ENCODE measurements at regions of chr12 and their contacts with region 1.

Region 1: GRCh38 chr12:49945394-49946080 is 5.0 kb upstream of the AQP2 start:
- DNase-seq: peak; percentile 88
- ATAC-seq: peak; percentile 99
- H3K4me3 Mint-ChIP-seq: peak overlapping the region; percentile 70
- H3K27ac Mint-ChIP-seq: peak overlapping the region; percentile 92
- H3K4me1 Mint-ChIP-seq: peaks cover 24% of the 10 kb centered on the region
- H3K27me3 Mint-ChIP-seq: no peaks in the 10 kb centered on the region

Region 2: DNA sequence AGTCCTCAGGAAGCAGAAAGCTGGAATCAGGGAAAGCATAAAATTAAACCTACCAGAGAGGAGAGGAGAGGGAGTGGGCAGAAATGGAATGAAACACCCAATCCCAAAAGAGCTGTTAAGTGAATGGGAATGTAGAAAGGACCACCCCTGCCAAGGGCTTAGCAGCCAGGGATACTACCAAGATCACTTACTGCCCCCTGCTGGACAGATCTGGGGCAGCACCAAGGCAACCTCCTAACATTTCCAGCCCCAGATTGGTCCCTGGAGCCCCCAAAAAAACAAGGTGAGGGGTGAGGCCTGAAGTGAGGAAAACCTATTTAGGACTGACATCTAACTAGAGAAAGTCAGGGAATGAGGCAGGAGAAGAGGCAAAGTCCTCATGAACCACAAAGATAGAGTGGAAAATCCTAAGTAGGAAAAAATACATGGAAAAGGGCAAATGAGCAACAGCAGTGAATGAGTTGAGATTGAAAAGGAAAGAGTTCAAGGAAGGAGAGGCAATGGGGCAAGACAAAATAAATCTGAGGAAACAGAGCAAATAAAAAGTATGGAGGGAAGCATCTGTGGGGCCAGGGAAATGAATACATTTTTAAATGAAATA is 1009.1 kb before region 1 on chr12:
- CTCF ChIA-PET with region 1: no interaction called
- POLR2A ChIA-PET with region 1: no interaction called
- DNase-seq: peak; percentile 88
- ATAC-seq: peak; percentile 60
- H3K4me3 Mint-ChIP-seq: no peak overlapping the region
- H3K27ac Mint-ChIP-seq: no peak overlapping the region
- H3K4me1 Mint-ChIP-seq: peaks cover 26% of the 10 kb centered on the region
- H3K27me3 Mint-ChIP-seq: no peaks in the 10 kb centered on the region

Region 3: DNA sequence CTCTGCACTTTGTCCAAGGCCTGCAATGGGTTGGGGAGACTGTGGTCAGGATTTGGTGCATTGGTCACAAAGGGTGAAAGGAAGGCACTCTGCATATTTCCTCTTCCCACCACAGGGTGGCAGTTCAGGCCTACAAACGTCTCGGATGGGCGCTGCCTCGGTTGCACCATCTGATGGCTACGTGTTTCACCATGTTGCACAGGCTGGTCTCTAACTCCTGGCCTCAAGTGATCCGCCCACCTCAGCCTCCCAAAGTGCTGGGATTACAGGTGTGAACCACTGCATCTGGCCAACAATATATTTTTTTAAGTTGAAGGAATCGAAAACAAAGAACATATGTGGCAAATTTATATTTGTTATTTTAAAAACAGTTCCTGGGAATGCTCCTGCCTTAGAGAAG is 169.1 kb before region 1 on chr12:
- CTCF ChIA-PET with region 1: interaction called, 11 read pairs
- POLR2A ChIA-PET with region 1: no interaction called
- DNase-seq: peak; percentile 78
- ATAC-seq: peak; percentile 85
- H3K4me3 Mint-ChIP-seq: no peak overlapping the region
- H3K27ac Mint-ChIP-seq: peak overlapping the region; percentile 48
- H3K4me1 Mint-ChIP-seq: peaks cover 20% of the 10 kb centered on the region
- H3K27me3 Mint-ChIP-seq: peaks cover 20% of the 10 kb centered on the region

Region 4: DNA sequence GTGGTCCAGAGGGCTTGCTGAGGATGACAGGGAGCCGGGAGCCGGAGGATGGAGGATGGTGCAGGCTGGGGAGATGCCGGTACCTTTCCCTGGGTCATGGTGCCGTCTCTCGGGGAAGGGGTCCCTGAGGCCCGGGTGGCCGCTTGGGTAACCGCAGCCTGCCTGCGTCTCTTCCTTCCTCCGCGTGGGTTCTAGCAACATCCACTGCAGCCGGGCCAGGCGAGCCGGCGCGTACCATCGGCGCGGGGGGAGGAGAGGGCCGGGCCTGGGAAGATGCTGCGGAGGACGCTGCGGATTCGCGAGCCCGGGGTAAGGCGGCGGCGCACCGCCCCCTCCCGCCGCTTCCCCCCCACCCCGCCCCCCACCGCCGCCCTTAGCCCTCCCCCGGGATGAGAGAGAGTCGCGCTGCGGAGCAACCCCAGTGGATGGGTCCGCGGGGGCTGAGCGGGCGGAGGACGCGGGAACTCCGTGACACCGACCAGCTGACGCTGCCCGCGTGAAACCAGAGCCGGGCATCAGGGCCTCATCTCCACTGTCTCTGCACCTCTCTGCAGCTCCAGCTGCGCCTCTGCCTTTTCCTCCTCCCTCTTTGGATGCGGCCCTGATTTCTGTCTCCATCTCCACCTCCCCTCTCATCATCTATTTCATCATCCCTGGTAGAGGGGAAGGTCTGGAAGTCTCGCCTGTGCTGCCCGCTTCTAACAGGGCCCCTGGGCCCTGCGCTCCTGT is 41.7 kb before region 1 on chr12 and contains the start of gene FAIM2:
- CTCF ChIA-PET with region 1: interaction called, 19 read pairs
- POLR2A ChIA-PET with region 1: no interaction called
- DNase-seq: peak; percentile 67
- ATAC-seq: peak; percentile 85
- H3K4me3 Mint-ChIP-seq: peak within 1 kb of the TSS; percentile 67
- H3K27ac Mint-ChIP-seq: peak within 1 kb of the TSS; percentile 59
- H3K4me1 Mint-ChIP-seq: peaks cover 17% of the 10 kb centered on the region
- H3K27me3 Mint-ChIP-seq: peaks cover 14% of the 10 kb centered on the region
- total RNA-seq, gene FAIM2: 0.23 to 0.55 TPM

Region 5: DNA sequence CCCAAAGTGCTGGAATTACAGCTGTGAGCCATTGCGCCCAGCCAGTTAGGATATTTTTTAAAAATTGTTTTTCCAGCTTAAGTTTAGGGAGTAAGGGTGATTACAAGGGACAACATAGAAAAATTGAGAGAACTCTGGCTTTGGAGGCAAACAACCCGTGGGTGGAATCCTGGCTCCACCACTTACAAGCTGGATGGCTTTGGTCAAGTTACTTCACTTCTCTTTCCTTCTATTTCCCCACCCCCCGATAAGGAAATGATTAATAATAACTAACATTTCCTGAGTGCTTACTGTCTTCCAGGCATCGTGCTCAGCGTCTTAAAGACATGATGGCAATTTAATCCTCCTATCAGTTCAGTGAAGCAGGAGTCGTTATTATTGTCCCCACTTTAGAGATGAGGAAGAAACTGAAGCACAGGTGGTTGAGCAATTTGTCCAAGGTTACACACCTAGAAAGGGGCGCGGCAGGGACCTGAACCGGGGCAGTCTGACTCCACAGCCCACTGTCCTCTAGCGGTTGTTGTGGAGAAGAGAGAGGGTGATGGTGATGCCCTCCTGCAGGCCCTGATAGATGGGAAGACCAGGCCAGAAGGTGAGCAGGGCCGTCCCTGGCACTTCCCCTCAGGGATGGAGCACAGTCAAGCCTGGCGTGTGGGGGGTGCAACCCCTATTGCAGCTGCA is 25.2 kb before region 1 on chr12:
- CTCF ChIA-PET with region 1: interaction called, 13 read pairs
- POLR2A ChIA-PET with region 1: no interaction called
- DNase-seq: no peak
- ATAC-seq: no peak
- H3K4me3 Mint-ChIP-seq: no peak overlapping the region
- H3K27ac Mint-ChIP-seq: no peak overlapping the region
- H3K4me1 Mint-ChIP-seq: no peaks in the 10 kb centered on the region
- H3K27me3 Mint-ChIP-seq: peaks cover 4% of the 10 kb centered on the region

Region 6: DNA sequence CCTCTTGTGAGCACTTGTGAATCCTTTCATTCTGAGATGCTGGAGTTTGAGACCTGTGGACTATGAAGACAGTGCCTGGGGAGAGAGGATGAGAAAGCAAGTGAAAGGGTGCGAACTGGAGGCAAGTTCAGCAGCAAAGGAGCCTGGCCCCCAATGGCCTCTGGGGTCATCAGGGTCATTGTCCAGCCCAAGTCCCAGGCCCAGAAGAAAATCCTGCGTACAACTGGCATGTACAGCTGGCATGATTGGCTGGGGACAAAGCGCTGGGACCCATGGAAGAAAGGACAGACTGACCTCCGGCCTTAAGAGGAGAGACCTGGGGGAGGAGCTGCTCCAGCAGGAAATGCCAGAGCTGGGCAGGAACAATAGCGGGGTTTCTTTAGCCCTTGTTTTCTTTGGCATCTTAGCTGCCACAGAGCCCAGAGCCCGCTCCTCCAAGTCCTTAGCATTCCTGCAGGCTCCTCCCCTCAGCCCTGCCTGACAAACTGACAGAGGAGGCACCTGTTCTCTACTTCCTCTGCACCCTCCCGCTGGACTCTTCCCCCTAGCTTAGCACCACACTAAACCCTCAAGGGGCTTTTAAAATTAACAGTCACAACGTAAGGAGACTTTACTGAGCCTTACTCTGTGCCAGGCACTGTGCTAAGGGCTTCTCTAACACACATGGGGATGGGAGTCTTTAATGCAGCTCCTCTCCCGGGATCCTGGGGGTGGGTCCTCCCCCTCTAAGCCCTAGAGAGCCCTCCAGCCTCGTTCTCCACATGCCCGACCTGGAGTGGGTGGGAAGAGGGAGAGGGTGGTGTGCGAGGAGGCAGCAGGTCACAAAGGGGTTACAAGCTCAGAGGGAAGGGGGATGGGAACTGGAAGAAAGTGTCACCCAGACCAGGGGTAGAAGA is 14.3 kb after region 1 on chr12:
- CTCF ChIA-PET with region 1: interaction called, 103 read pairs
- POLR2A ChIA-PET with region 1: interaction called, 3 read pairs
- DNase-seq: no peak
- ATAC-seq: no peak
- H3K4me3 Mint-ChIP-seq: no peak overlapping the region
- H3K27ac Mint-ChIP-seq: no peak overlapping the region
- H3K4me1 Mint-ChIP-seq: peaks cover 10% of the 10 kb centered on the region
- H3K27me3 Mint-ChIP-seq: peaks cover 79% of the 10 kb centered on the region

Region 7: DNA sequence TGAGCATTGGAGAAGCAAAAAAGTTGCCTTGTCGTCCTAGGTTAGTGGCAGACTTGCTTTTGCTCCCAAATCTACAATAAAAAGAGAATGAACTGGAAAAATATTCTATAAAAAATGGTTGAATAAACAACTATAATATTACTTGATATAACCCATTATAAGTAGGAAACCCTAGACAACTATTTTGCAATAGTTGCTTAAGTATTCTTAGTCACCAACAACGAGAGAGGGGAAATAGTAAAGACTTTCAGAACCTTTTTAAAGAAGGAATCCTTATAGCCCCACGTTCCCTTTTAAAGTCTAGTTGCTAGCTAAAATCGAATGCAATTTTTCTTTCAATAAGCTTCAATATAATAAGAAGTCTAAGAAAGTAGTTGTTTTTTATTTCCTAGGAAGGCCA is 44.7 kb after region 1 on chr12:
- CTCF ChIA-PET with region 1: interaction called, 12 read pairs
- POLR2A ChIA-PET with region 1: no interaction called
- DNase-seq: no peak
- ATAC-seq: no peak
- H3K4me3 Mint-ChIP-seq: no peak overlapping the region
- H3K27ac Mint-ChIP-seq: no peak overlapping the region
- H3K4me1 Mint-ChIP-seq: no peaks in the 10 kb centered on the region
- H3K27me3 Mint-ChIP-seq: no peaks in the 10 kb centered on the region

Region 8: DNA sequence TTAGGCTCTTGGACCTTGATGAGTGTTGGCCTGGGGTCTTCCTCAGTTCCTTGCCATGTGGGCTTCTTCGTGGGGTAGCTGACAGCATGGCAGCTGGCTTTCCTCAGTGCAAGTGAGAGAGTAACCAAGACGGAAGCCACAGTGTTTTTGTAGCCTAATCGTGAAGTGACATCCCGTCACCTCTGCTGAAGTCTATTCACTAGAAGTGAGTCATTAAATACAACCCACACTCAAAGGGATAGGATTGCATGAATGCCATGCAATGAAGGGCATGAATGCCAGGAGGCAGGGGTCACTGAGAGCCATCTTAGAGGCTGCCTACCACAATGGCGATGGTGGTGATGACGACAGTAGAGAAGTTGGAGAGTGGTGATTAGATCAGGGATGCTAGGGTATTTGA is 98.3 kb after region 1 on chr12:
- CTCF ChIA-PET with region 1: interaction called, 19 read pairs
- POLR2A ChIA-PET with region 1: no interaction called
- DNase-seq: no peak
- ATAC-seq: no peak
- H3K4me3 Mint-ChIP-seq: no peak overlapping the region
- H3K27ac Mint-ChIP-seq: no peak overlapping the region
- H3K4me1 Mint-ChIP-seq: peaks cover 4% of the 10 kb centered on the region
- H3K27me3 Mint-ChIP-seq: peaks cover 8% of the 10 kb centered on the region

Region 9: GRCh38 chr12:50097952-50098351 is 152.4 kb after region 1 on chr12:
- CTCF ChIA-PET with region 1: no interaction called
- POLR2A ChIA-PET with region 1: no interaction called
- DNase-seq: no peak
- ATAC-seq: no peak
- H3K4me3 Mint-ChIP-seq: no peak overlapping the region
- H3K27ac Mint-ChIP-seq: no peak overlapping the region
- H3K4me1 Mint-ChIP-seq: no peaks in the 10 kb centered on the region
- H3K27me3 Mint-ChIP-seq: no peaks in the 10 kb centered on the region

Region 10: DNA sequence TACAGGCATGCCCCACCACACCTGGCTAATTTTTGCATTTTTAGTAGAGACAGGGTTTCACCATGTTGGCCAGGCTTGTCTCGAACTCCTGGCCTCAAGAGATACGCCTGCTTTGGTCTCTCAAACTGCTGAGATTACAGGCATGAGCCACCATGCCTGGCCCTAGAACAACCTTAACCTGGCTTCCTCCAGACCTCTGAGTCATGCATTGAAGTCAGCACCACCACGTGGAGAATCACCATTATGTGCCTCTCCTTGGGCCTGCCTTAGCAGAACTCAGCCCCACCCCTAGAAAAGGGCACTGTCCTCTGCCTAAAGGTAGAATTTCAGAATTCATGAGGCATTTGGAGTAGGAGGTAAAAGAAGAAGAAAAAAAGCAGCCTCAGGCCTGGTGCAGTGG is 288.8 kb after region 1 on chr12:
- CTCF ChIA-PET with region 1: no interaction called
- POLR2A ChIA-PET with region 1: no interaction called
- DNase-seq: no peak
- ATAC-seq: peak; percentile 49
- H3K4me3 Mint-ChIP-seq: no peak overlapping the region
- H3K27ac Mint-ChIP-seq: no peak overlapping the region
- H3K4me1 Mint-ChIP-seq: no peaks in the 10 kb centered on the region
- H3K27me3 Mint-ChIP-seq: no peaks in the 10 kb centered on the region